ENCODE measurements at regions of chr5 and their contacts with region 1.

Region 1: DNA sequence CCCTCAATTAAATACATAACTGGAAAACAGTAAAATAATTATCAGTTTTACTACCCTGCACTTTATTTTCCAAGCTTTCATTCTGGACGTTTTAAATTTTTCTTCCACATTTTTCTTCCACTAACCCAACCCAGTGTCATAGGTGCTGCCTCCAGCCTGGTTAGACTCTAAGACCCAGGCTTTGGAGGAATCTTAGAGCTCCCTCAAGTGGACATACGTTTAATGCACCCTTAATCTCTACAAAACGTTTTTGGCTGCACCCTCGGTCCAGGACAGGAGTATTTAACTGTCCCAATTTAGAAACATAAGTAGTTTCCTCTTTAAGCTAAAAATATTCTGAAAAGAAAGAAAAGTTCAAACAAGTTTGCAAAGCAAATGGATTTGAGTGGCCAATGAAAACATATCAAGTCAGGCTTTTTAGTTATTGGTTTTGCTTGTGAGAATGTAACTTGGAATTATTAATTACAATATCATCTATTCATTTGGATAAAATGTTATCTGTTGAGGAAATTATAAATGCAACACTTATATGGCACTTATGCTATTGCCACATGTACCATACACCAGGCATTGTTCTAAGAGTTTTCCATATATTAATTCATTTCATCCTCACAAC is 38.9 kb downstream of the CDH6 start:
- DNase-seq: peak in 1 of 2 donors; percentile 66
- ATAC-seq: peak; percentile 81 to 92 (median 90)
- H3K4me3 ChIP-seq: no peak overlapping the region
- H3K27ac ChIP-seq: peak overlapping the region in 4 of 10 donors; percentile 37 to 65 (median 58)
- H3K4me1 ChIP-seq: peaks cover 0 to 28% (median 10%) of the 10 kb centered on the region in 9 donors
- H3K27me3 ChIP-seq: no peaks in the 10 kb centered on the region
- CTCF ChIP-seq: peak; percentile 43 to 78 (median 71)

Region 2: DNA sequence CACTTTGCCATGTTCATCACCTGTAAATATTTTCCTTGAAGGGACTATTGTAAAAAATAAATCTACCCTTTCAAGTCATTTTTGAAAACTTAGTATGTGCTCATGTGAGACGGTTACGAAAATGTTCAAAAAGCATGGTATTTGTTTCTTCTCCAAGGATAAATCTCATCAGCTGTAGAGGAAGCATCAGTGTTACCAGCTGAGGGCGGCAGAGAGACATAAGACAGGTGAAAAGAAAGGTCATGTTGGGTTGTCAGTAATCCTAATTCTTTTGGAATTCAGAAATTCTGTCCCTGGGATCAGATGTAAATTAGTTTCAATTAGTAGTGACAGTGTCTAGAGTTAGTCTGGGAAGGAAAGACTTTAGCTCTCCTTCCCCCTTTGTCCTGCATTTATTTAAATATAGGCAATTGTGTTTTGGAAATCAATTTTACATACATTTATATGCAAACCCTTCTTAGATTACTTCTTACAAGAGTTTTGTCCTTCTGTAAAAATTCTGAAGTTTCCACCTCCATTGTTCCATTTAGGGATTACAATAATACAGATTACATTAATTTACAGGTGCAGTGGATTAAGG is 830.8 kb before region 1 on chr5:
- intact Hi-C with region 1: loop called in 5 of 10 experiments (anchors 2 to 10 kb)
- DNase-seq: peak in 1 of 2 donors; percentile 10
- ATAC-seq: no peak
- H3K4me3 ChIP-seq: no peak overlapping the region
- H3K27ac ChIP-seq: no peak overlapping the region
- H3K4me1 ChIP-seq: no peaks in the 10 kb centered on the region
- H3K27me3 ChIP-seq: no peaks in the 10 kb centered on the region
- CTCF ChIP-seq: peak; percentile 11 to 63 (median 44)

Region 3: DNA sequence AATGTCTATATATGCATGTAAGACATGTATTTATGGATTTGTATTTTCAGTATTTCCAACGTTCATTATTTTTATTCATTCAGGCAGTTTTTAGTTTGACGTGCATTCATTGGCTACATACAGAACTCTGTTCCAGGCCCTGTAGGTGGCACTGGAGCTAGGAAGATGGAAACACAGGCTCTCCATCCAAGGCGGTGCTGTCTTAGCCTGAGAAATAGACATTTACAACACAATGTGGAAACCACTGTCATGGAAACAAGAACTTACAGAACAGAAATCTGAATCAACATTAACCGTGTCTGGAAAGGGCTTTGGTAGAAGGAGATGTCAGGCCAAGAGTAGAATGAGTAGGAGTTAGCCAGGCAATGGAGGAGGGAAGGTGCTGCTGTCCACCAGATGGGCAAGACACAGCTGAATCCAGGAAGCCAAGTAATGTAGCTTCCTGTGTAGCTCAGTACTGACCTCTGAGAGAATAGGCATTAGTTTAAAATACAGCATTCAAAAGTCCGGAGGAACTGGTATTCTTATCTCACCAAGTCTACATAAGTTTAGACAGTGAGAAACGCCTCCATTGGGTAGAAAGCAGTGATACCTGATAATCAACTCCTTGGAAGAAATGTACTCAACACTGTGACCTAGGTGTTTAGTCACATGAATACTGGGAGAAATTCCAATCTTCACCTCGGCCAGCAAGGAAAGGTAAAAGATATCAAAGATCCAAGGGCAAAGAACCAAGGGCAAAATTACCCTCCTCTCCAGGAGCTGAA is 427.5 kb before region 1 on chr5:
- intact Hi-C with region 1: loop called in 3 of 10 experiments (anchors 10 kb)
- DNase-seq: peak in 1 of 2 donors; percentile 8
- ATAC-seq: peak in 5 of 8 donors; percentile 59 to 83 (median 80)
- H3K4me3 ChIP-seq: no peak overlapping the region
- H3K27ac ChIP-seq: no peak overlapping the region
- H3K4me1 ChIP-seq: no peaks in the 10 kb centered on the region
- H3K27me3 ChIP-seq: no peaks in the 10 kb centered on the region
- CTCF ChIP-seq: peak in 8 of 9 donors; percentile 10 to 67 (median 51)

Region 4: GRCh38 chr5:31193591-31194467 is 38.6 kb before region 1 on chr5 and contains the start of gene CDH6:
- intact Hi-C with region 1: loop called in 2 of 10 experiments (anchors 5 kb)
- DNase-seq: peak; percentile 4 to 28
- ATAC-seq: peak in 7 of 8 donors; percentile 50 to 82 (median 64)
- H3K4me3 ChIP-seq: peak within 1 kb of the TSS; percentile 26 to 62 (median 54)
- H3K27ac ChIP-seq: peak within 1 kb of the TSS in 9 of 10 donors; percentile 5 to 74 (median 64)
- H3K4me1 ChIP-seq: peaks cover 0 to 21% (median 4%) of the 10 kb centered on the region in 9 donors
- H3K27me3 ChIP-seq: peaks cover 0 to 74% (median 50%) of the 10 kb centered on the region in 7 donors
- CTCF ChIP-seq: no peak
- total RNA-seq, gene CDH6: 1.8 to 7.5 (median 3.6) TPM

Measured in heart right ventricle (tissue), 16 donors.